ENCODE measurements at regions of chr3 and their contacts with region 1.

Region 1: GRCh38 chr3:187738331-187739093 is 6.8 kb downstream of the BCL6 start:
- DNase-seq: peak; percentile 81
- ATAC-seq: peak; percentile 46
- H3K4me3 ChIP-seq: peak overlapping the region; percentile 66 to 93 (median 84)
- H3K4me3 Mint-ChIP-seq: peak overlapping the region; percentile 97
- H3K27ac ChIP-seq: peak overlapping the region in 1 of 2 donors; percentile 66
- H3K27ac Mint-ChIP-seq: peak overlapping the region; percentile 75
- H3K4me1 ChIP-seq: peaks cover 34 to 57% of the 10 kb centered on the region in 2 donors
- H3K4me1 Mint-ChIP-seq: peaks cover 62% of the 10 kb centered on the region
- H3K27me3 ChIP-seq: no peaks in the 10 kb centered on the region
- H3K27me3 Mint-ChIP-seq: no peaks in the 10 kb centered on the region
- CTCF ChIP-seq: peak; percentile 82

Region 2: GRCh38 chr3:186790261-186790981 is 948.1 kb before region 1 on chr3:
- CTCF ChIA-PET with region 1: no interaction called
- POLR2A ChIA-PET with region 1: no interaction called
- intact Hi-C with region 1: no loop called
- DNase-seq: peak; percentile 29
- ATAC-seq: no peak
- H3K4me3 ChIP-seq: no peak overlapping the region
- H3K4me3 Mint-ChIP-seq: no peak overlapping the region
- H3K27ac ChIP-seq: peak overlapping the region in 1 of 2 donors; percentile 61
- H3K27ac Mint-ChIP-seq: peak overlapping the region; percentile 32
- H3K4me1 ChIP-seq: peaks cover 26 to 28% of the 10 kb centered on the region in 2 donors
- H3K4me1 Mint-ChIP-seq: peaks cover 44% of the 10 kb centered on the region
- H3K27me3 ChIP-seq: no peaks in the 10 kb centered on the region
- H3K27me3 Mint-ChIP-seq: no peaks in the 10 kb centered on the region
- CTCF ChIP-seq: no peak

Region 3: GRCh38 chr3:187305881-187306280 is 432.6 kb before region 1 on chr3:
- CTCF ChIA-PET with region 1: no interaction called
- POLR2A ChIA-PET with region 1: no interaction called
- intact Hi-C with region 1: no loop called
- DNase-seq: no peak
- ATAC-seq: no peak
- H3K4me3 ChIP-seq: no peak overlapping the region
- H3K4me3 Mint-ChIP-seq: no peak overlapping the region
- H3K27ac ChIP-seq: no peak overlapping the region
- H3K27ac Mint-ChIP-seq: no peak overlapping the region
- H3K4me1 ChIP-seq: no peaks in the 10 kb centered on the region
- H3K4me1 Mint-ChIP-seq: no peaks in the 10 kb centered on the region
- H3K27me3 ChIP-seq: peaks cover 0 to 7% (median 1%) of the 10 kb centered on the region in 4 experiments
- H3K27me3 Mint-ChIP-seq: peaks cover 35% of the 10 kb centered on the region
- CTCF ChIP-seq: no peak

Region 4: DNA sequence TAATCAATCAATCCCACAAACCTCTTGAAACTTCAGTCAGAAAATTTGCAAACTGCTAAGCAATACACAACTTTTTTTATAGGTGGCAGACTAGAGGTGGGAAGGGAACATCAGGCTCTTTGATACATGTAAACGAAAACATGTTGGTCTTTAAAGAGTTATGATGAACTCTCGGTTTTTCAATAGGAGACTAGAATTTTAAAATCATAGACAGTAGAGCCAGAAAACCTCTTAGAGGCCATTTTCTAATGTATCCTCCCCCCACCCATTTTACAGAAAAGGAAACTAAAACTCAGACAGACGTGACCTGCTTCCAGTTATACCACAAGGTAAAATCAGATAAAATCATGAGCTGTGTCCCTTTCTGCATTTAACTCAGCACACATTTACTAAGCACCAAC is 236.4 kb after region 1 on chr3:
- CTCF ChIA-PET with region 1: interaction called, 20 read pairs
- POLR2A ChIA-PET with region 1: interaction called, 6 read pairs
- intact Hi-C with region 1: no loop called
- DNase-seq: peak; percentile 56
- ATAC-seq: no peak
- H3K4me3 ChIP-seq: peak overlapping the region in 3 of 5 experiments; percentile 29 to 51 (median 34)
- H3K4me3 Mint-ChIP-seq: peak overlapping the region; percentile 81
- H3K27ac ChIP-seq: no peak overlapping the region
- H3K27ac Mint-ChIP-seq: peak overlapping the region; percentile 73
- H3K4me1 ChIP-seq: peaks cover 51 to 57% of the 10 kb centered on the region in 2 donors
- H3K4me1 Mint-ChIP-seq: peaks cover 65% of the 10 kb centered on the region
- H3K27me3 ChIP-seq: peaks cover 0 to 14% (median 5%) of the 10 kb centered on the region in 4 experiments
- H3K27me3 Mint-ChIP-seq: peaks cover 26% of the 10 kb centered on the region
- CTCF ChIP-seq: peak; percentile 22

Region 5: DNA sequence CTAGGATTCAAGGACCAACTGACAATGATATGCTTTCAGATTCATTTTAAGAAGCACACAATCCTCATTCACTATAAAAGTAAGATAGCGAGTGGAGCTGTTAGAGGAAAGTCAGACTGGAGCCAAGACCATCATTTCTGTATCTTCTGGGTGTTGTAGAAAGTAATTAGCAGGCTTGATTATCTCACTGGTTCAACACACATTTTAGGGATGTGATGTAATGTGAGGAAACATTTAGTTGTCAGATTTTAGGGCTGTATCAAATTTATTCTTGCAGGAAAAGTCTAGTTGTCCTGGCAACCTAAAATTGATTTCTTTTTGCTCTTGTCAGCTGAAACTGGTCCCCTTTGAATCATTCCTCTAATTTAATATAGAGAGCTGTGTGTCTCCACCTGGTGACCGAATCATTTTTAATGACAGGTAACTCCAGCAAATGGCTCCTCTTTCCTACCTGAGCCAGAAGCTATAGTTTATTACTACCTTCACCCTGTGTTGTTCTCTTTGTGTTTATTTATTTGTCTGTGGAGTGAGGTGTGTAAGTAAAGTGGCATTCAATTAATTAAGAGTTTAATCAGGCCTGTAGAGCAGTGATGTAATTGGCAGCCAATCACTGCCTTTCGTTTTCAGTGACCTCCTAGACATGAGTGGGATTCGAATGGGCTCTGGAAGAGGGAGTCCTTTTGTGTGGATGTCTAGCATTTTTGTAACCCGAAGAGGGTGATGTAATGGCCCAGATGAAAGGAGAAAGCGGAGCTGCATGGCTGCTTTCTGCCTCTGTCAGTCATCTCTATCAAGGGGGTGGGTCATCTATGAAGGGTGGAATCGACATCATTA is 541.2 kb after region 1 on chr3:
- CTCF ChIA-PET with region 1: interaction called, 19 read pairs
- POLR2A ChIA-PET with region 1: no interaction called
- intact Hi-C with region 1: loop called (anchors 5 kb)
- DNase-seq: no peak
- ATAC-seq: no peak
- H3K4me3 ChIP-seq: no peak overlapping the region
- H3K4me3 Mint-ChIP-seq: no peak overlapping the region
- H3K27ac ChIP-seq: no peak overlapping the region
- H3K27ac Mint-ChIP-seq: no peak overlapping the region
- H3K4me1 ChIP-seq: peaks cover 6 to 8% of the 10 kb centered on the region in 2 donors
- H3K4me1 Mint-ChIP-seq: peaks cover 29% of the 10 kb centered on the region
- H3K27me3 ChIP-seq: no peaks in the 10 kb centered on the region
- H3K27me3 Mint-ChIP-seq: no peaks in the 10 kb centered on the region
- CTCF ChIP-seq: no peak

Region 6: GRCh38 chr3:188421836-188422540 is 683.5 kb after region 1 on chr3:
- CTCF ChIA-PET with region 1: interaction called, 21 read pairs
- POLR2A ChIA-PET with region 1: interaction called, 3 read pairs
- intact Hi-C with region 1: no loop called
- DNase-seq: peak; percentile 89
- ATAC-seq: peak; percentile 95
- H3K4me3 ChIP-seq: peak overlapping the region in 1 of 5 experiments; percentile 47
- H3K4me3 Mint-ChIP-seq: peak overlapping the region; percentile 74
- H3K27ac ChIP-seq: peak overlapping the region; percentile 89 to 94
- H3K27ac Mint-ChIP-seq: peak overlapping the region; percentile 98
- H3K4me1 ChIP-seq: peaks cover 59 to 72% of the 10 kb centered on the region in 2 donors
- H3K4me1 Mint-ChIP-seq: peaks cover 90% of the 10 kb centered on the region
- H3K27me3 ChIP-seq: no peaks in the 10 kb centered on the region
- H3K27me3 Mint-ChIP-seq: no peaks in the 10 kb centered on the region
- CTCF ChIP-seq: no peak

Region 7: DNA sequence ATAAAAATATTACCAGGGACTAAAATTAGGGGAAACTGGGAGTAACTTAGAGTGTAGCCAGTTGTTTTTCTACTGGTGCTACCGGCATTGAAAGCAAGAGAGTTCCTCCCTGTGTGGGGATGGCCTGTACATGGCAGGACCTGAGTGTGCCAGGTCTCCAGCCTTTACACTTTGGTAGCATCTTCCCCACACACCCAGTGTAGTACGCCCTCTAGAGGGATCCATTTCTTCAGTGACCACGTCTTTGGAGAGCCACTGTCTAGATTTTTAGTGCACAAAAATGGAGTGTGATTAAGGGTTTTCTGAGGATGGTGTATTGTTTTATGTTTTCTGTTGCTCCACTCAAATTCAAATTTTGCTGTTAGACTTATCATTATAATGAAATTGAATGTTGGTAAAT is 926.3 kb after region 1 on chr3:
- CTCF ChIA-PET with region 1: interaction called, 14 read pairs
- POLR2A ChIA-PET with region 1: no interaction called
- intact Hi-C with region 1: loop called (anchors 2 kb)
- DNase-seq: peak; percentile 38
- ATAC-seq: peak; percentile 41
- H3K4me3 ChIP-seq: no peak overlapping the region
- H3K4me3 Mint-ChIP-seq: no peak overlapping the region
- H3K27ac ChIP-seq: no peak overlapping the region
- H3K27ac Mint-ChIP-seq: no peak overlapping the region
- H3K4me1 ChIP-seq: no peaks in the 10 kb centered on the region
- H3K4me1 Mint-ChIP-seq: no peaks in the 10 kb centered on the region
- H3K27me3 ChIP-seq: no peaks in the 10 kb centered on the region
- H3K27me3 Mint-ChIP-seq: no peaks in the 10 kb centered on the region
- CTCF ChIP-seq: no peak

Region 8: DNA sequence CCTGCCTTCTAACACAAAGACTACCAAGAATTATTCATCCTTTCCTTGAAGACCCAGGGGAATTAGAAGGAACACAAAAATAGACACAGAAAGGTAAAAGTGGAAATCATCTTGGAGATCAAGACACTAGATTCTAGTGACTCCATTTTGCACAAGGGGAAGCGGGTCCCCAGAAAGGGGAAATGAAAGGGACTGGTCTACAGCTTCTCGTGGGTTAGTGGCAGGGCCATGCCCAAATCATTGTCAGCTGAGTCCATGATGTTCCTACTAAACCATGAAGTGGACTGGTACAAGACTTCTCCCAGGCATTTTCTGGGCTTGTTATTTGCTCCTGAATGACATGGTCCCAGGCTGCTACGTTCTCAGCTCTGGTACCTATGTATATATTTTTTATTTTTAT is 1202.6 kb after region 1 on chr3:
- CTCF ChIA-PET with region 1: interaction called, 64 read pairs
- POLR2A ChIA-PET with region 1: no interaction called
- intact Hi-C with region 1: no loop called
- DNase-seq: peak; percentile 73
- ATAC-seq: peak; percentile 85
- H3K4me3 ChIP-seq: no peak overlapping the region
- H3K4me3 Mint-ChIP-seq: no peak overlapping the region
- H3K27ac ChIP-seq: no peak overlapping the region
- H3K27ac Mint-ChIP-seq: no peak overlapping the region
- H3K4me1 ChIP-seq: peaks cover 6 to 11% of the 10 kb centered on the region in 2 donors
- H3K4me1 Mint-ChIP-seq: peaks cover 7% of the 10 kb centered on the region
- H3K27me3 ChIP-seq: no peaks in the 10 kb centered on the region
- H3K27me3 Mint-ChIP-seq: peaks cover 3% of the 10 kb centered on the region
- CTCF ChIP-seq: no peak

Measured in B cell (primary cell).